Activated naive CD4-positive, alpha-beta T cell treated with anti-CD3 and anti-CD28 coated beads for 36 hours (primary cell): ENCODE measurements at regions of chr1 and their contacts with region 1.

Region 1: GRCh38 chr1:167373398-167373797 is 144.9 kb downstream of the CD247 start:
- DNase-seq: no peak
- H3K4me3 Mint-ChIP-seq: no peak overlapping the region
- H3K27ac Mint-ChIP-seq: no peak overlapping the region
- H3K4me1 Mint-ChIP-seq: no peaks in the 10 kb centered on the region
- H3K27me3 Mint-ChIP-seq: no peaks in the 10 kb centered on the region

Region 2: DNA sequence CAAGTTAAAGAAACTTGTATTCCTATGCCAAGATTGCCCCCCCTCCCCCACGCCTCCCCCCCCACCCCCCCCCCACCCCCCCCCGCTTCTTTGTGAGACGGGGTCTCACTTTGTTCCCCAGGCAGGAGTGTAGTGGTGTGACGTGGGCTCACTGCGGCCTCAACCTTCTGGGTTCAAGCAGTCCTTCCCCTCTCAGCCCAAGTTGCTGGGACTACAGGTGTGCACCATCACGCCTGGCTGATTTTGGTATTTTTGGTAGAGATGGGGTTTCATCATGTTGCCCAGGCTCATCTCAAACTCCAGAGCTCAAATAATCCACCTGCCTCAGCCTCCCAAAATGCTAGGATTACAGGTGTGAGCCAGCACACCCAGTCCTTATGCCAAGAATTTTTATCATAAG is 16.1 kb before region 1 on chr1:
- CTCF ChIA-PET with region 1: interaction called, 4 read pairs
- intact Hi-C with region 1: loop called (anchors 1 kb)
- DNase-seq: no peak
- H3K4me3 Mint-ChIP-seq: no peak overlapping the region
- H3K27ac Mint-ChIP-seq: no peak overlapping the region
- H3K4me1 Mint-ChIP-seq: no peaks in the 10 kb centered on the region
- H3K27me3 Mint-ChIP-seq: no peaks in the 10 kb centered on the region